Caki2 (cell line): ENCODE measurements at regions of chr13 and their contacts with region 1.

Region 1: GRCh38 chr13:48131533-48131932 is 36.6 kb upstream of the MED4 start:
- DNase-seq: no peak

Region 2: GRCh38 chr13:48235341-48236135 is 104.0 kb after region 1 on chr13:
- in situ Hi-C with region 1: loop called (anchors 5 kb)
- DNase-seq: peak; percentile 61

Region 3: GRCh38 chr13:48412881-48413351 is 281.4 kb after region 1 on chr13 and contains the start of gene LPAR6:
- in situ Hi-C with region 1: no loop called
- DNase-seq: no peak
- total RNA-seq, gene LPAR6: not detected in 2 replicates